ENCODE measurements at regions of chr1 and their contacts with region 1.

Region 1: DNA sequence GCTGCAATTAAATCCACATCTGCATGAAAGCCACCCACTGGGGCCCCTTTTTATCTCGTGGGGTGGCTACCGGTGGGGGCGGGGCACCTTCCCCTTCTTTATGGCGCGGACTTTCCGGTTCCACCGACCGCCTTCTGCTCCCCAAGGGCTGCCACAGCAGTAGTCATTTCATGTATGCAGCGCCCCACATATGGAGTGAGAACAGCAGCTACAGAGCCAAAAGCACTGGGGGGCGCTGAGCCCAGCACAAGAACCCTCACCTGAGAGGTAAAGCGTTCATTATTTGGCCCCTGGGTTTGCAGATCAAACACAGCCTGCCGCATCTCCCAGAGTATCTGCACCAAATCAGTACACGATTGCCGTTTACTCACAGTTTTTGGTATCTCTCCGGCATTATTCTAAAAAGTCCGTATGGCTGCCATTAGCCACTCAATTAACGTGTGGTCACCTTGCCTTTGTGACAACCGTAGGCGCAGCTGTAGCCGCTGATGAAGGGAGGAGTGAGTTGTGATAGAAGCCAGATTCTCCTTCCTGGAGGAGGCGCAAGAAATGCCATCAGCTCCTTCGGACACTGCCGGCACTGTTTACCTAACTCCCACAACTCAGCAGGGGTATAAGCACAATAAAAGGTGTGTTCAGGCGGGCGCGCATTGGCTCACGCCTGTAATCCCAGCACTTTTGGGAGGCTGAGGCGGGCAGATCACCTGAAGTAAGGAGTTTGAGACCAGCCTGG is 30.4 kb upstream of the CR2 start:
- DNase-seq: no peak

Region 2: GRCh38 chr1:206106328-206107167 is 1317.2 kb before region 1 on chr1:
- intact Hi-C with region 1: no loop called
- DNase-seq: peak; percentile 94

Region 3: GRCh38 chr1:206992790-206993189 is 430.9 kb before region 1 on chr1:
- intact Hi-C with region 1: loop called in 1 of 2 experiments (anchors 5 kb)
- DNase-seq: no peak

Region 4: DNA sequence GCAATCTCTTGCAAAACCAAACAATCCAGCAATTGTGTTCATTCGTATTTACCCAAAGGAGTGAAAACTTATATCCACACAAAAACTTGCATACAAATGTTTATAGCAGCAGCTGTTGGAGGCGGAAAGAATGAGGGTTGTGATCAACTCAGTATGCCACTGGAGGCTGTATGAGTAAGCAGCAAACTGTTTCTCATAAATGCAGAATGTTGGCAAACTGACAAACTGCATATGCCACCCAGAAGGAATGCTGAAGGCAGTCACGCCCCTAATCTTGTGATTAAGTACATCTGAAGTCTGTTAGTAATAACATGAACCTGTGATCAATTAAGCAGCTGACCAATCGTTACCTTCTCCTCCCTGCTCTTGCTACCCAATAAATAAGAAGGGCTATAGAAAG is 30.1 kb before region 1 on chr1:
- intact Hi-C with region 1: loop called in 1 of 2 experiments (anchors 2 kb)
- DNase-seq: no peak

Measured in posterior vena cava (tissue), 2 donors.